ENCODE measurements at regions of chr4 and their contacts with region 1.

Region 1: DNA sequence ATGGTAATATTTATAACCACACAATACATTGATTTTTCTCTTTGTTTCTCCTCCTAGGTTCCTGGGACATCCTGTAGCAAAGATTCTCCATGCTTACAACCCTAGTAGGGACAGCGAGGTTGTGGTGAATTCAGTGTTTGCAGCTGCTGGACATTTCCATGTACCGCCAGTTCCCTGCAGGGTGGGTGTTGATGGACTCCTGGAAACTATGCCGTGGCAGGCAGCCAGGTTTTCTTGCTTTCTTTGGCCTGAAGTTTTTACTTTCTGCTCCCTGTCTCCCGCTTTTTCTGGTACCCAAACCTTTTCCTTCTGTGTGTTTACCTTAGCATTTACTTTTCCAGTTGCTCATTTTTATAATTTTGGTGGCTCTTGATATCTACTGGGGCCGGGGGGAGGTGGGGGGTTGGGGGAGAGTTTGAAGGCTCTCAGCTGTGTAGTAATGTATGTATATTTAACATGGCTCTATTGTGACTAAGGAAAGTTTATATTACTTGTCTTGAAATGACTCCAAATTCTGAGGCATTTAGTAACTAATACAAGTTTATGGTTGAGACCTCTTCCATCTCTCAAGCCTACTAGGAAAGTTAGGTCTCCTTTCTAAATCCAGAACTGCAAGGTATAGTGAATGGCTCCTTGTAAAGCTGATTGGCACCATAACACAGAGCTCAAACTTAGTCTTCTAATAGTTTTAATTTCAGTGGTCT is 89.7 kb downstream of the TMEM131L start:
- DNase-seq: no peak
- H3K4me3 ChIP-seq: no peak overlapping the region
- H3K27ac ChIP-seq: no peak overlapping the region
- H3K4me1 ChIP-seq: no peaks in the 10 kb centered on the region
- H3K27me3 ChIP-seq: no peaks in the 10 kb centered on the region
- CTCF ChIP-seq: no peak
- POLR2A ChIP-seq: no peak

Region 2: GRCh38 chr4:153488006-153488891 is 67.6 kb before region 1 on chr4:
- intact Hi-C with region 1: loop called (anchors 10 kb)
- DNase-seq: no peak
- H3K4me3 ChIP-seq: peak overlapping the region; percentile 4 to 20
- H3K27ac ChIP-seq: peak overlapping the region; percentile 74
- H3K4me1 ChIP-seq: peaks cover 41% of the 10 kb centered on the region
- H3K27me3 ChIP-seq: no peaks in the 10 kb centered on the region
- CTCF ChIP-seq: no peak
- POLR2A ChIP-seq: no peak